ENCODE measurements at regions of chr1 and their contacts with region 1.

Region 1: GRCh38 chr1:18883636-18884418 is 18.5 kb downstream of the ALDH4A1 start:
- DNase-seq: peak; percentile 63
- ATAC-seq: peak; percentile 95
- H3K4me3 Mint-ChIP-seq: no peak overlapping the region
- H3K27ac Mint-ChIP-seq: no peak overlapping the region
- H3K4me1 Mint-ChIP-seq: no peaks in the 10 kb centered on the region
- H3K27me3 Mint-ChIP-seq: no peaks in the 10 kb centered on the region
- CTCF ChIP-seq: peak; percentile 70

Region 2: GRCh38 chr1:18913065-18913835 is 29.4 kb after region 1 on chr1:
- CTCF ChIA-PET with region 1: interaction called, 26 read pairs
- POLR2A ChIA-PET with region 1: no interaction called
- intact Hi-C with region 1: loop called (anchors 1 kb)
- DNase-seq: peak; percentile 73
- ATAC-seq: peak; percentile 93
- H3K4me3 Mint-ChIP-seq: no peak overlapping the region
- H3K27ac Mint-ChIP-seq: no peak overlapping the region
- H3K4me1 Mint-ChIP-seq: peaks cover 18% of the 10 kb centered on the region
- H3K27me3 Mint-ChIP-seq: no peaks in the 10 kb centered on the region
- CTCF ChIP-seq: no peak

Region 3: GRCh38 chr1:18972531-18972930 is 88.7 kb after region 1 on chr1:
- CTCF ChIA-PET with region 1: interaction called, 76 read pairs
- POLR2A ChIA-PET with region 1: interaction called, 5 read pairs
- intact Hi-C with region 1: loop called (anchors 1 kb)
- DNase-seq: no peak
- ATAC-seq: peak; percentile 37
- H3K4me3 Mint-ChIP-seq: no peak overlapping the region
- H3K27ac Mint-ChIP-seq: no peak overlapping the region
- H3K4me1 Mint-ChIP-seq: no peaks in the 10 kb centered on the region
- H3K27me3 Mint-ChIP-seq: peaks cover 11% of the 10 kb centered on the region
- CTCF ChIP-seq: no peak

Region 4: DNA sequence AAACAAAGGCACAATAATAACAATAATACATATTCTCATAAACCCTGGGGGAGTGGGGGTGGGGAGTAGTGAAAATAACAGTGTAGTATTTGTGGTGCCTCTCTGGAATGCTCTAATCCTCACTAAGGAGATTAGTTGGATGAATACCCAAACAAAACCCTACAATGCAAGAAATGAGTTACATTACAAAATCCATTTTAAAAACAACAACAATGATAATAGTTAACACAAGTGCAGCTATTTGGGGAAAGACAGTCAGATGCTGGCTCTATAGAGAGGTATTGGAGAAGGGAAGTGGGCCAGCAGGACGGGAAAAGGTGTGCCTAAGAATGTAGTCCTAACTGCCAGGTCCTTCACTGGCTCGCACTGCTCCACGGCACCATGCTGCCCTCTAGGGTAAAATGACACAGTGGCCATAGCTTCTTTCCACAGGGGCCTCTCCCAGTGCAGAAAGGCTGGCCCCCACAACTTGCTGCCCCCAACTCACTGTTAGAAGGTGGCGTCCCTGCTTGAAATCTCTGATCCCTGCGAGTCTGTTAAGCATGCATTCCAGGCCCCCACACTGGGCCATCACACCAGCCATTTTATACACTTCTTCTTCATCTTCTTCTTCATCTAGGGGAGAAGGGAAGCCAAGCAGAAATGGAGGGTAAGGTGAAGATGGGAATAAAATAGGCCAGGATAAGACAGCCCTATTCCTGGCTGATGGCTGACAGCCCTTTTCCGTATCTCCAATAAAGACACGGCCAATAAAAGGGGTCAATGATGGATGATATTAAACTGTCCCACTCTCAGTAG is 212.4 kb after region 1 on chr1:
- CTCF ChIA-PET with region 1: interaction called, 8 read pairs
- POLR2A ChIA-PET with region 1: no interaction called
- intact Hi-C with region 1: loop called (anchors 1 kb)
- DNase-seq: no peak
- ATAC-seq: no peak
- H3K4me3 Mint-ChIP-seq: no peak overlapping the region
- H3K27ac Mint-ChIP-seq: no peak overlapping the region
- H3K4me1 Mint-ChIP-seq: no peaks in the 10 kb centered on the region
- H3K27me3 Mint-ChIP-seq: no peaks in the 10 kb centered on the region
- CTCF ChIP-seq: no peak

Region 5: DNA sequence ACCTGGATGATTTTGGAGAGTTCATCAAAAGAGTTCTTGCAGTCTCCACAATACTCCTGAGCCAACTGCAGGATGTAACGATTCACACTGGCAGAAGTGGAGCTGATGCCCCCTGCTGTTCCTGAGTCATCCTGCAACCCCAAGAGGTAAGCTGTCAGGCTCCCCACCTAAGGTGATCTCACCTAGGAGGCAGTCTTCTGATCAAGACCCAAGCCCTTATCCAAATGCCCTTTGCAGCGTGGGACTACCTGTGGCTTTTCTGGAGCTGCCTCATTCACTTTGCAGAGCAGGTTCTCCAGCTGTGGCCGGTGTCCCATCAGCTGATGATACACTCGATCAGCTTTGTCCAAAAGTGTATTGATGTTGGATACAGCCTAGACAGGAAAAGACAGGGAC is 229.9 kb after region 1 on chr1:
- CTCF ChIA-PET with region 1: interaction called, 11 read pairs
- POLR2A ChIA-PET with region 1: no interaction called
- intact Hi-C with region 1: loop called (anchors 1 kb)
- DNase-seq: no peak
- ATAC-seq: no peak
- H3K4me3 Mint-ChIP-seq: no peak overlapping the region
- H3K27ac Mint-ChIP-seq: no peak overlapping the region
- H3K4me1 Mint-ChIP-seq: no peaks in the 10 kb centered on the region
- H3K27me3 Mint-ChIP-seq: no peaks in the 10 kb centered on the region
- CTCF ChIP-seq: no peak

Region 6: GRCh38 chr1:19240673-19241538 is 357.1 kb after region 1 on chr1:
- CTCF ChIA-PET with region 1: interaction called, 8 read pairs
- POLR2A ChIA-PET with region 1: no interaction called
- intact Hi-C with region 1: loop called (anchors 1 kb)
- DNase-seq: peak; percentile 52
- ATAC-seq: peak; percentile 99
- H3K4me3 Mint-ChIP-seq: no peak overlapping the region
- H3K27ac Mint-ChIP-seq: no peak overlapping the region
- H3K4me1 Mint-ChIP-seq: no peaks in the 10 kb centered on the region
- H3K27me3 Mint-ChIP-seq: no peaks in the 10 kb centered on the region
- CTCF ChIP-seq: peak; percentile 95

Measured in activated B cell treated with CpG ODN at 0.5 μM for 24 hours (primary cell).